ENCODE measurements at regions of chr2 and their contacts with region 1.

Region 1: DNA sequence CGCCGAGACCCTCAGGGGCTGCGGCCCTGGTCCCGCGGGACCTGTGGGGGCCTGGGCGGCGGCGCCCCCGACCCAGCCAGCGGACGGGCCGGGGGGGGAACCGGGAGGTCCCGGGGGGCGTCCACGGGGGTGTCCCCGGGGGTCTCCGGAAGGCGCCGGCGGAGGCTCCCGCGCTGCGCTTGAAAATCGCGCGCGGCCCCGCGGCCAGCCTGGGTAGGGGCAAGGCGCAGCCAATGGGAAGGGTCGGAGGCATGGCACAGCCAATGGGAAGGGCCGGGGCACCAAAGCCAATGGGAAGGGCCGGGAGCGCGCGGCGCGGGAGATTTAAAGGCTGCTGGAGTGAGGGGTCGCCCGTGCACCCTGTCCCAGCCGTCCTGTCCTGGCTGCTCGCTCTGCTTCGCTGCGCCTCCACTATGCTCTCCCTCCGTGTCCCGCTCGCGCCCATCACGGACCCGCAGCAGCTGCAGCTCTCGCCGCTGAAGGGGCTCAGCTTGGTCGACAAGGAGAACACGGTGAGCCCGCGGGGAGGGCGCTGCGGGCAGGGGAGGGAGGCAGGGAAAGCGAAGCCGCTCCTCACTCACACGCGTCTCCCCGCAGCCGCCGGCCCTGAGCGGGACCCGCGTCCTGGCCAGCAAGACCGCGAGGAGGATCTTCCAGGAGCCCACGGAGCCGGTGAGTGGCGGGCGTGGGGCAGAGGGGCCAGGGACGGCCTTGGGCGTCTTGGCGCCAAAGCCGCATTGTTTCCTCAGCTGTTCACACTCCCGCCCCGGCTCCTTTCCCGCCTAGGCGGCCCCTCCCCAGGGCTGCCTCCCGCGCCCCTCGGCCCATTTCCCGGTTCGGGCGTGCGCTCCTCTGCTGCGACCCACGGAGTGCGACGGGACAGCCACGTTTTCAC is at the start of gene RRM2:
- DNase-seq: peak; percentile 76 to 94
- H3K4me3 ChIP-seq: peak within 1 kb of the TSS; percentile 47 to 69
- H3K27ac ChIP-seq: no peak within 1 kb of the TSS
- H3K4me1 ChIP-seq: peaks cover 13 to 20% of the 10 kb centered on the region in 2 donors
- H3K27me3 ChIP-seq: peaks cover 7% of the 10 kb centered on the region
- CTCF ChIP-seq: no peak
- total RNA-seq, gene RRM2: not detected

Region 2: GRCh38 chr2:9843229-9844035 is 279.2 kb before region 1 on chr2 and contains the start of gene TAF1B:
- intact Hi-C with region 1: loop called (anchors 2 kb)
- DNase-seq: peak in 1 of 2 donors; percentile 87
- H3K4me3 ChIP-seq: peak within 1 kb of the TSS; percentile 92 to 93
- H3K27ac ChIP-seq: peak within 1 kb of the TSS; percentile 87 to 88
- H3K4me1 ChIP-seq: peaks cover 6 to 9% of the 10 kb centered on the region in 2 donors
- H3K27me3 ChIP-seq: no peaks in the 10 kb centered on the region
- CTCF ChIP-seq: peak in 1 of 3 experiments; percentile 11
- total RNA-seq, gene TAF1B: 58.5 TPM

Region 3: DNA sequence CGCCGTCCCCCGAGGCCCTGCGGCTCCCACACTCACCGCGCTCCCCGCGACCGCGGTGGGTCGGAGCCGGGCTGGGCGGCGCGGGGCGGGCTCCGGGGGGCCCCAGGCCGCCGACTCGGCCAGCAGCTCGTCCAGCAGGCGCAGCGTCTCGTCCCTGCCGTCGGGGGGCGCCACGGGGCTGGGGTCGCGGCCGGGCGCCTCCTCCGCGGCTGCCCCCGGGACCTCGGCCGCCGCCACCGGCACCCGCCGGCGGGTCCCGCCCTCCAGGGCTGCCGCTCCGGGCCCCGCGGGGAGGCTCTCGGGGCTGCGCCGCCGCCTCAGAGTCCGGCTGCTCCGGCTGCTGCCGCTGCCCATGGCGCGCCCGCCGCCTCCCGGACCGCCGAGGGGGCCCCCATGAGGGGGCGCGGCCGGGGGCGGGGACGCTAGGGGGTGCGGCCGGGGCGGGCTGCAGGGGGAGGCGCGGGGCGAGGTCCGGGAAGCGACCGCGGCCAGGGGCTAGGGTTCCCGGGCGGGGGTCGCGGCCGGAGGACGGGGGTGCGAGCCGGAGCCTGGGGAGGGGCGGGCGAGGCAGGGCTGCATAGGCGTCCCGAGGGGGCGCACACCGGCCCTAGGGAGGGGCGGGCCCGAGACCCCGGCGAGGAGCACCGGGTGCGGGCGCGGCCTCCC is 42.6 kb before region 1 on chr2 and contains the start of gene CYS1:
- intact Hi-C with region 1: loop called (anchors 2 kb)
- DNase-seq: no peak
- H3K4me3 ChIP-seq: peak within 1 kb of the TSS; percentile 84 to 95
- H3K27ac ChIP-seq: peak within 1 kb of the TSS; percentile 85 to 98
- H3K4me1 ChIP-seq: peaks cover 0 to 10% of the 10 kb centered on the region in 2 donors
- H3K27me3 ChIP-seq: no peaks in the 10 kb centered on the region
- CTCF ChIP-seq: peak in 1 of 3 experiments; percentile 57
- total RNA-seq, gene CYS1: 13.8 TPM

Region 4: GRCh38 chr2:10141736-10142642 is 19.4 kb after region 1 on chr2:
- intact Hi-C with region 1: no loop called
- DNase-seq: no peak
- H3K4me3 ChIP-seq: no peak overlapping the region
- H3K27ac ChIP-seq: no peak overlapping the region
- H3K4me1 ChIP-seq: no peaks in the 10 kb centered on the region
- H3K27me3 ChIP-seq: no peaks in the 10 kb centered on the region
- CTCF ChIP-seq: peak in 1 of 3 experiments; percentile 36

Region 5: GRCh38 chr2:10302479-10303180 is 180.0 kb after region 1 on chr2 and contains the start of gene HPCAL1:
- intact Hi-C with region 1: loop called (anchors 2 kb)
- DNase-seq: peak; percentile 30 to 90
- H3K4me3 ChIP-seq: peak within 1 kb of the TSS; percentile 68 to 92
- H3K27ac ChIP-seq: peak within 1 kb of the TSS; percentile 78 to 84
- H3K4me1 ChIP-seq: peaks cover 0 to 6% of the 10 kb centered on the region in 2 donors
- H3K27me3 ChIP-seq: no peaks in the 10 kb centered on the region
- CTCF ChIP-seq: peak; percentile 50 to 70 (median 59)
- total RNA-seq, gene HPCAL1: 401 TPM

Region 6: DNA sequence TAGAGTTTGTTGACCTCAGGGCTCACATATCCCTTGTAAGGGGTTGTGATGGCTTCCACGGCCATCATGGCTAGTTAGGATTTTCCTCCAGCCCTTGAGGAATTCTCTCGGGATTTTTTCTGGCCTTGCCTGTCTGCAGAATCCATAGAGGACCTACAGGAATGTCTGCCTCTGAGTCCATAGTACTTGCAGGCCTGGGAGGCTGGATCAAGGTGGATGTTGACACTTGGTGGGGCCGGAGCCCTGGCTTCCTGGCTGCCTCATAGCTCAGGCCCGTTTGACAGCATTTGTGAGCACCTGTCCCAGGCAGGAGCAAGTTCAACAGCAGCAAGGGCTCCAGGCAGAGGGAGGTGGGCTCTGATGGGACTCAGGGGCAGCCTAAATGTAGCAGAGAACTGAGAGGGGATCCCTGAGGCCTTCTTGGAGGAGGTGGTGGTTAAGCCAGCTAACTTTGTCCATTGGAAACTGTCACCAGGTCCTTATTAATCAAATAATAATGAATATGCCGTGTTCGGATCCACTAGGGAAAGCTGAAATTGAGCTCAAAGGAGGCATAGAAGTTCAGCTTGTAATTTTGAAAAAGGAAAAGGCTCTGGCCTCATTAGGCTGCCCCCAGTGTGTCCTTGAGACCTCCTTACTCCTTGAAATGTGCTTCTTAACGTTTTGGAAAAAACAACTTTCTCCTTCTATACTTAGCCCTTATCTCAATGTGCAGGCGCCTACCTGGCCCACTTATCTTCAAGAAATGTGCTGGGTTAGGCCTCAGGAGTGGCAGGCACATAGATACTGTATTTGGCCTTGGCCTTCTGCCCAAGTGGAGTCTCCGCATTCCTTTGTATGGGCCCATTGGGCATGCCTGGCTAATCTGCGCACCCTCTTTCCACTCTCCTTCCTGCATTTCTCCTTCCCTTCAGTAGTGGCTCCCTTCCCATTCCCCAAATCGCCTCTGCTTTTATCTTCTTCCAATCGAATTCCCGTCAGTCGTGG is 246.9 kb after region 1 on chr2:
- intact Hi-C with region 1: no loop called
- DNase-seq: no peak
- H3K4me3 ChIP-seq: no peak overlapping the region
- H3K27ac ChIP-seq: no peak overlapping the region
- H3K4me1 ChIP-seq: no peaks in the 10 kb centered on the region
- H3K27me3 ChIP-seq: no peaks in the 10 kb centered on the region
- CTCF ChIP-seq: no peak

Region 7: GRCh38 chr2:10434886-10435819 is 312.5 kb after region 1 on chr2:
- intact Hi-C with region 1: loop called (anchors 1 kb)
- DNase-seq: peak in 1 of 2 donors; percentile 84
- H3K4me3 ChIP-seq: no peak overlapping the region
- H3K27ac ChIP-seq: no peak overlapping the region
- H3K4me1 ChIP-seq: peaks cover 0 to 2% of the 10 kb centered on the region in 2 donors
- H3K27me3 ChIP-seq: no peaks in the 10 kb centered on the region
- CTCF ChIP-seq: peak; percentile 94 to 99 (median 95)

Region 8: GRCh38 chr2:10812362-10813162 is 689.9 kb after region 1 on chr2 and contains the start of gene PDIA6:
- intact Hi-C with region 1: loop called (anchors 5 kb)
- DNase-seq: peak; percentile 89 to 98
- H3K4me3 ChIP-seq: peak within 1 kb of the TSS; percentile 68 to 74
- H3K27ac ChIP-seq: peak within 1 kb of the TSS; percentile 71 to 81
- H3K4me1 ChIP-seq: peaks cover 0 to 20% of the 10 kb centered on the region in 2 donors
- H3K27me3 ChIP-seq: no peaks in the 10 kb centered on the region
- CTCF ChIP-seq: peak in 1 of 3 experiments; percentile 43
- total RNA-seq, gene PDIA6: 56.4 TPM